ENCODE measurements at regions of chr4 and their contacts with region 1.

Region 1: GRCh38 chr4:26081795-26082498 is 167.9 kb downstream of the SMIM20 start:
- DNase-seq: no peak
- ATAC-seq: peak; percentile 64
- H3K4me3 Mint-ChIP-seq: no peak overlapping the region
- H3K27ac Mint-ChIP-seq: peak overlapping the region; percentile 61
- H3K4me1 Mint-ChIP-seq: peaks cover 70% of the 10 kb centered on the region
- H3K27me3 Mint-ChIP-seq: no peaks in the 10 kb centered on the region

Region 2: GRCh38 chr4:26069218-26069617 is 12.7 kb before region 1 on chr4:
- CTCF ChIA-PET with region 1: interaction called, 13 read pairs
- DNase-seq: no peak
- ATAC-seq: peak; percentile 54
- H3K4me3 Mint-ChIP-seq: no peak overlapping the region
- H3K27ac Mint-ChIP-seq: no peak overlapping the region
- H3K4me1 Mint-ChIP-seq: peaks cover 10% of the 10 kb centered on the region
- H3K27me3 Mint-ChIP-seq: peaks cover 7% of the 10 kb centered on the region

Region 3: GRCh38 chr4:26183017-26183416 is 101.1 kb after region 1 on chr4:
- CTCF ChIA-PET with region 1: no interaction called
- DNase-seq: no peak
- ATAC-seq: no peak
- H3K4me3 Mint-ChIP-seq: no peak overlapping the region
- H3K27ac Mint-ChIP-seq: no peak overlapping the region
- H3K4me1 Mint-ChIP-seq: peaks cover 8% of the 10 kb centered on the region
- H3K27me3 Mint-ChIP-seq: no peaks in the 10 kb centered on the region

Region 4: GRCh38 chr4:26288355-26288909 is 206.5 kb after region 1 on chr4:
- CTCF ChIA-PET with region 1: no interaction called
- DNase-seq: peak; percentile 79
- ATAC-seq: peak; percentile 94
- H3K4me3 Mint-ChIP-seq: no peak overlapping the region
- H3K27ac Mint-ChIP-seq: peak overlapping the region; percentile 76
- H3K4me1 Mint-ChIP-seq: peaks cover 22% of the 10 kb centered on the region
- H3K27me3 Mint-ChIP-seq: no peaks in the 10 kb centered on the region

Region 5: DNA sequence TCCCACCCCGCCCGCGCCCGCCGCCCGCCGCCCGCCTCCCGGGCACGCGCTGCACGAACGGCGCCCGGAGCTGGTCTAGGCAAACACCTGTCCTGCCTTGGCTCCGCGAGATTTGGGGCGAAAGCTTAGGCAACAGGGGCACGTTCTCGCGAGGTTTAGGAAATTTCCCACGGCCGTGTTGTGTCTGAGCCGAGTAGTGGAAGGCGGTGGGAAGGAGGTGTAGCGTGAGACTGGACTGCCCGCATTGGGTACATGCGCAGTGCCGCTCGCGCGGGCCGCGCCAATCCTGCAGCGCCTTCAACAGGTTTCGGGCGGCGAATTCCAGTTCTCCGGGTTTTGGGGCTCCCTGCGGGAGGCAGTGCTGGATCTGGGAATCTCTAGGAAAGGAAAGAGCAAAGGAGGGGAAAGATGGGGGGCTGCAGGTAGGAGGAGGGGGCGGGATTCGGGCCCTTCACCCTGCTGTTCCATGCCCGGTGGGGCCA is 237.6 kb after region 1 on chr4:
- CTCF ChIA-PET with region 1: interaction called, 11 read pairs
- DNase-seq: peak; percentile 99
- ATAC-seq: peak; percentile 71
- H3K4me3 Mint-ChIP-seq: peak overlapping the region; percentile 97
- H3K27ac Mint-ChIP-seq: peak overlapping the region; percentile 99
- H3K4me1 Mint-ChIP-seq: peaks cover 39% of the 10 kb centered on the region
- H3K27me3 Mint-ChIP-seq: no peaks in the 10 kb centered on the region